ENCODE measurements at regions of chr18 and their contacts with region 1.

Region 1: DNA sequence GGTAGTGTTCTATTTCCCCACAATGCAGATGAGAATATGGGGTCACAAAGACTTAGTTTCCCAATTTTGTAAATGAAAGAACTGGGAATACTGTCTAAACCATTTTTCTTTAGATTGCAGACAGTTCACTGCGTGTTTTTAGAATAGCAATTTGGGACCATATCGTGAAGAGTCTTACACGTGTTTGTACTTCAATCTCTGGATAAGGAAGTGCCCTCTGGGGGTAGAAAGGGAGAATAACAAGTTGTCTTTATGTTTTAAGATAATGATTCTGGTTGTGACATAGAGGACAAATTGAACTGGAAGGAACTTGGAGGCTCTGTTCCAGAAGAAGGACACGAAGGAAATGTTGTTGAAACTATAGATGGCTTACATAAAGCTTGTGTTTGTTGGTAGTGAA is 457.7 kb downstream of the CBLN2 start:
- DNase-seq: peak in 2 of 14 experiments; percentile 4 to 6
- ATAC-seq: peak; percentile 43
- H3K4me3 ChIP-seq: no peak overlapping the region
- H3K4me3 Mint-ChIP-seq: no peak overlapping the region
- H3K27ac ChIP-seq: no peak overlapping the region
- H3K27ac Mint-ChIP-seq: no peak overlapping the region
- H3K4me1 ChIP-seq: no peaks in the 10 kb centered on the region
- H3K4me1 Mint-ChIP-seq: no peaks in the 10 kb centered on the region
- H3K27me3 ChIP-seq: no peaks in the 10 kb centered on the region
- H3K27me3 Mint-ChIP-seq: no peaks in the 10 kb centered on the region
- CTCF ChIP-seq: peak; percentile 30

Region 2: GRCh38 chr18:70781860-70782453 is 1304.5 kb before region 1 on chr18:
- CTCF ChIA-PET with region 1: no interaction called
- POLR2A ChIA-PET with region 1: no interaction called
- intact Hi-C with region 1: loop called in 1 of 2 experiments (anchors 10 kb)
- DNase-seq: peak; percentile 39 to 80 (median 61)
- ATAC-seq: peak; percentile 99
- H3K4me3 ChIP-seq: no peak overlapping the region
- H3K4me3 Mint-ChIP-seq: no peak overlapping the region
- H3K27ac ChIP-seq: no peak overlapping the region
- H3K27ac Mint-ChIP-seq: peak overlapping the region; percentile 65
- H3K4me1 ChIP-seq: no peaks in the 10 kb centered on the region
- H3K4me1 Mint-ChIP-seq: peaks cover 23% of the 10 kb centered on the region
- H3K27me3 ChIP-seq: no peaks in the 10 kb centered on the region
- H3K27me3 Mint-ChIP-seq: no peaks in the 10 kb centered on the region
- CTCF ChIP-seq: peak; percentile 66

Region 3: GRCh38 chr18:72995558-72995957 is 909.1 kb after region 1 on chr18:
- CTCF ChIA-PET with region 1: no interaction called
- POLR2A ChIA-PET with region 1: no interaction called
- intact Hi-C with region 1: no loop called
- DNase-seq: no peak
- ATAC-seq: no peak
- H3K4me3 ChIP-seq: no peak overlapping the region
- H3K4me3 Mint-ChIP-seq: no peak overlapping the region
- H3K27ac ChIP-seq: no peak overlapping the region
- H3K27ac Mint-ChIP-seq: no peak overlapping the region
- H3K4me1 ChIP-seq: no peaks in the 10 kb centered on the region
- H3K4me1 Mint-ChIP-seq: no peaks in the 10 kb centered on the region
- H3K27me3 ChIP-seq: no peaks in the 10 kb centered on the region
- H3K27me3 Mint-ChIP-seq: no peaks in the 10 kb centered on the region
- CTCF ChIP-seq: no peak